Transverse colon (tissue), 4 donors: ENCODE measurements at regions of chr9 and their contacts with region 1.

Region 1: GRCh38 chr9:31140316-31140715 is 1244.1 kb upstream of the ACO1 start:
- DNase-seq: no peak
- H3K4me3 ChIP-seq: no peak overlapping the region
- H3K27ac ChIP-seq: no peak overlapping the region
- H3K4me1 ChIP-seq: no peaks in the 10 kb centered on the region
- H3K27me3 ChIP-seq: no peaks in the 10 kb centered on the region
- CTCF ChIP-seq: peak in 2 of 5 experiments; percentile 21 to 22
- EP300 ChIP-seq: no peak
- POLR2A ChIP-seq: no peak

Region 2: DNA sequence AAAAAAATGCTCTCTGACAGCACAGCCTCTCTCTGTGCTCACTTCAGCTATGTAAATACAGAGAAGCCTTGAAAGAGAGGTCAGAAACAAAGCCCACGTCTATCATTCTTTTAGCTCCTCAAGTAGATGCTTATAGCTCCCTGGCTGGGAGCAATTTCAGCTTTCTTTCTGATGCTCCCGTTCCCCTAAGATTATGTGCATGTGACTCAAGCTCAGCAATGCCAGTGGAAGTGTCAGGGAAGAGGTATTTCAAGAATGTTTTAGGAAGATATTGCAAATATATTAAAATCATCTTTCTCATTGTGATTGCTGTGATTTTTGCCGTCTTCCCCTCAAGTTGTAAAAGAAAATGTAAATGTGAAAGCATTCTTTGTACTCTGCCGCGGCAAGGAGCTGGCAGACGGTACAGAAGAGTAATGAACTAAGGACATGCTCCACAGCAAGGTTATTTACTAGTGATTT is 109.5 kb before region 1 on chr9:
- in situ Hi-C with region 1: loop called in 1 of 4 experiments (anchors 25 kb)
- intact Hi-C with region 1: no loop called
- DNase-seq: no peak
- H3K4me3 ChIP-seq: no peak overlapping the region
- H3K27ac ChIP-seq: no peak overlapping the region
- H3K4me1 ChIP-seq: no peaks in the 10 kb centered on the region
- H3K27me3 ChIP-seq: no peaks in the 10 kb centered on the region
- CTCF ChIP-seq: no peak
- EP300 ChIP-seq: no peak
- POLR2A ChIP-seq: no peak

Region 3: DNA sequence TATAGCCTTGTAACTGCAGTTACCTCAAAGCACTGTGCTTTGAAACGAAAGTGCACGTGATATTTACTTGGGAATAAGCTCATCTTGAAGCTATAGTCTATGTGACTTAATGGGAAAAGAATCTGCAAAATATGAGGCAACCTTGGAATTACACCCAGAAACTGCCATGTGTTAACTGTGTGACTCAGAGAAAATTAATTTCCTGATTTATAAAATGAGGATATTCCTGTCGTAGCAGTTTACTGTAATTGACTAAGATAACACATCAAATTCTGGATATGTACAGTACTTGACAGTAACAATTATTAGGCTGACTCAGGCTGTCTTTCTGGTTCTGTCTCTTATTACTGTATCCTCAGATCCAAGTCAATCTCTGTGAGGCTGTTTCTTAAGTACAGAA is 164.3 kb after region 1 on chr9:
- in situ Hi-C with region 1: loop called in 1 of 4 experiments (anchors 25 kb)
- intact Hi-C with region 1: no loop called
- DNase-seq: no peak
- H3K4me3 ChIP-seq: no peak overlapping the region
- H3K27ac ChIP-seq: no peak overlapping the region
- H3K4me1 ChIP-seq: no peaks in the 10 kb centered on the region
- H3K27me3 ChIP-seq: no peaks in the 10 kb centered on the region
- CTCF ChIP-seq: no peak
- EP300 ChIP-seq: no peak
- POLR2A ChIP-seq: no peak

Region 4: DNA sequence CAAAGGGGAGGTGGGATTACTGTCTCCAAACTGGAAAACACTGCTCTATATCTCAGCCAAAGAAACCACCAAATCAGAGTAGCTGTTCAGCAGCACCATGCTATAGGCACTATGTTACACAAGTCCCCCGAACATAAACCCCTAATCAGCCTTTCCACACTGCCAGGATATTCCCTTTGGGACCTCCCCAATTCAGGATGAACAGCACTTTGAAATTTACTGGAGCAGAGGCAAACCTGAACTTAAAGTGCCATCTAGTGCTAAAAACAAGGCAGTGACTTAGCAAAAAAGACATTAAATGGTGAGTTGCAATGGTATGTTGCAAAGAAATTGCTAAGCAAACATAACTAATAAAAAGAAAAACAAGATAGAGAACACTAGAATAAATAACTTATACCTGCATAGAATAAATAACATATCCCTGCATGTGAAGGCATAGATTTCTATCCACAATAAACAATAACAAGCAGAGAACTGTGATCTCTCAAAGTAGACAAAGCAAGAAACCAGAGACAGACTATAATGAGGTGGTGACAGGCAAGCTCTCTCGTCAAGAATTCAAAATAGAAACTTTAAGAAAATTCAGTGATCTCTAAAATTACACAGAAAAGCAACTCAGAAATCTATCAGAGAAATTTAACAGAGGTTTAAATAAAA is 659.8 kb after region 1 on chr9:
- in situ Hi-C with region 1: loop called in 1 of 4 experiments (anchors 25 kb)
- intact Hi-C with region 1: no loop called
- DNase-seq: no peak
- H3K4me3 ChIP-seq: no peak overlapping the region
- H3K27ac ChIP-seq: no peak overlapping the region
- H3K4me1 ChIP-seq: no peaks in the 10 kb centered on the region
- H3K27me3 ChIP-seq: no peaks in the 10 kb centered on the region
- CTCF ChIP-seq: peak in 2 of 5 experiments; percentile 22 to 31
- EP300 ChIP-seq: no peak
- POLR2A ChIP-seq: no peak

Region 5: GRCh38 chr9:32247168-32247567 is 1106.9 kb after region 1 on chr9:
- in situ Hi-C with region 1: loop called in 1 of 4 experiments (anchors 25 kb)
- intact Hi-C with region 1: no loop called
- DNase-seq: no peak
- H3K4me3 ChIP-seq: no peak overlapping the region
- H3K27ac ChIP-seq: no peak overlapping the region
- H3K4me1 ChIP-seq: peaks cover 0 to 3% (median 0%) of the 10 kb centered on the region in 4 donors
- H3K27me3 ChIP-seq: no peaks in the 10 kb centered on the region
- CTCF ChIP-seq: no peak
- EP300 ChIP-seq: no peak
- POLR2A ChIP-seq: no peak